Mammary epithelial cell (primary cell): ENCODE measurements at regions of chr19 and their contacts with region 1.

Region 1: DNA sequence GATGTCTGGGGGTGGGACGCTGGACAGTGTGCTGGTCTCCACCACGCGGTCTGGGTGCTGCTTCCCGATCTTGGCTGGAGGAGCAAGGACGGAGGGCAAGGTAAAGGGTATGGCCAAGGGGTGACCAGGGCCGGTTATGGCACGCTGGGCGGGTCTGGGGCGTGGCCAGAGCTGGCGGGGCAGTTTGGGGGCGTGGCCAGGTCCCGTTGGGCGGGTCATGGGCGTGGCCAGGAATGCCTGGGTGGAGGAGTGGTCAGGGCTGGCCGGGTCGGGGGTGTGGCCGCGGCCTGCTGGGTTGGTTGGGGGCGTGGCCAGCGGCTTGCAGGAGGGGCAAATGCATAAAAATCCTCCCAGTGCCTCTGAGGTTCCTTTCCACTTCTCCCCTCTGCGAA is 19.2 kb downstream of the GPX4 start:
- DNase-seq: peak; percentile 69
- H3K4me3 ChIP-seq: no peak overlapping the region
- H3K27ac ChIP-seq: no peak overlapping the region
- H3K4me1 ChIP-seq: peaks cover 14% of the 10 kb centered on the region
- H3K27me3 ChIP-seq: no peaks in the 10 kb centered on the region
- CTCF ChIP-seq: no peak

Region 2: DNA sequence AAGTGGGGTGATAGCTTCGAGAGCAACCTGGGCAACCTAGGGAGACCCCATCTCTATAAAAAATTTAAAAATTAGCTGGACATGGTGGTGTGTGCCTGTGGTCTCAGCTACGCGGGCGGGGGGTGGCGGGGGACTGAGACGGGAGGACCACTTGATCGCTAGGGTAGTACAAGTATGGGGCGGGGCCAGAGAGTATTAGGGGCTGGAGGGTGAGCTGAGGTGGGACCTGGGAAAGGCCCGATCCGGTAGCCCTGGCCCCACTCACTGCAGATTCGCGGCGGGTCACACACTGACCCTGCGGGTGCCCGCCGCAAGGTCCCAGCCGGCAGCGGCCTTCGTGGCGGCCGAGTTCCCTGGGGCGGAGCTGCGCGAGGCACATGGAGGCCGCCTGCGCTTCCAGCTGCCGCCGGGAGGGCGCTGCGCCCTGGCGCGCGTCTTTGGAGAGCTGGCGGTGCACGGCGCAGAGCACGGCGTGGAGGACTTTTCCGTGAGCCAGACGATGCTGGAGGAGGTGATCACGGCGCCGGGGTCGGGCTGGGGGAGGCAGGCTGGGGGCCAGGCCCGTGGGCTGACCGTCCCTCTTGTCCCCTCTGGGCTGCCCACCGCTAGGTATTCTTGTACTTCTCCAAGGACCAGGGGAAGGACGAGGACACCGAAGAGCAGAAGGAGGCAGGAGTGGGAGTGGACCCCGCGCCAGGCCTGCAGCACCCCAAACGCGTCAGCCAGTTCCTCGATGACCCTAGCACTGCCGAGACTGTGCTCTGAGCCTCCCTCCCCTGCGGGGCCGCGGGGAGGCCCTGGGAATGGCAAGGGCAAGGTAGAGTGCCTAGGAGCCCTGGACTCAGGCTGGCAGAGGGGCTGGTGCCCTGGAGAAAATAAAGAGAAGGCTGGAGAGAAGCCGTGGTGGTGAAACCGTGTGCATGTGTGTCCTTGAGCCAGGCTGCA is 58.0 kb before region 1 on chr19:
- CTCF ChIA-PET with region 1: no interaction called
- dilution Hi-C with region 1: loop called (anchors 10 kb)
- in situ Hi-C with region 1: no loop called
- intact Hi-C with region 1: no loop called
- DNase-seq: peak; percentile 52
- H3K4me3 ChIP-seq: no peak overlapping the region
- H3K27ac ChIP-seq: no peak overlapping the region
- H3K4me1 ChIP-seq: peaks cover 30% of the 10 kb centered on the region
- H3K27me3 ChIP-seq: no peaks in the 10 kb centered on the region
- CTCF ChIP-seq: peak; percentile 55 to 71

Region 3: GRCh38 chr19:1076951-1077350 is 46.0 kb before region 1 on chr19:
- CTCF ChIA-PET with region 1: no interaction called
- dilution Hi-C with region 1: no loop called
- in situ Hi-C with region 1: no loop called
- intact Hi-C with region 1: no loop called
- DNase-seq: peak; percentile 77
- H3K4me3 ChIP-seq: peak overlapping the region; percentile 34 to 53 (median 48)
- H3K27ac ChIP-seq: no peak overlapping the region
- H3K4me1 ChIP-seq: peaks cover 12% of the 10 kb centered on the region
- H3K27me3 ChIP-seq: no peaks in the 10 kb centered on the region
- CTCF ChIP-seq: no peak

Region 4: GRCh38 chr19:1087813-1088415 is 35.1 kb before region 1 on chr19:
- CTCF ChIA-PET with region 1: no interaction called
- dilution Hi-C with region 1: loop called (anchors 5 kb)
- in situ Hi-C with region 1: no loop called
- intact Hi-C with region 1: no loop called
- DNase-seq: no peak
- H3K4me3 ChIP-seq: no peak overlapping the region
- H3K27ac ChIP-seq: no peak overlapping the region
- H3K4me1 ChIP-seq: no peaks in the 10 kb centered on the region
- H3K27me3 ChIP-seq: no peaks in the 10 kb centered on the region
- CTCF ChIP-seq: no peak

Region 5: DNA sequence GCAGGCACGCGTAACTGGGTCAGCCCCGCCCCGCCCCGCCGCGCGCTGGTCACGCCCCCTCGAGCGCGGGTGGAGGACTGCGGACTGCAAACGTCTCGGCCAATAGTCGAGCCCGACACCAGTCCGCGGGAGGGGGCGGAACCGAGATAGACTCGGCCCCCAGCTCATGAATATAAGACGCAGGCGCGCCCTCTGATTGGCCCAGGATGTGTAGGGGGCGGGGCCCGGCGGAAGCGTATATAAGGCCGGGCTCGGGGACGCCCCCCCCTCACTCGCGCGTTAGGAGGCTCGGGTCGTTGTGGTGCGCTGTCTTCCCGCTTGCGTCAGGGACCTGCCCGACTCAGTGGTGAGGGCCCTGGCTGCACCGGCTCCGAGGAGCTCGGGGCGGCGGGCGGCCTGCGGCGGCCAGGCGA is 146.1 kb after region 1 on chr19 and contains the start of gene CIRBP:
- CTCF ChIA-PET with region 1: no interaction called
- dilution Hi-C with region 1: loop called (anchors 10 kb)
- in situ Hi-C with region 1: no loop called
- intact Hi-C with region 1: no loop called
- DNase-seq: peak; percentile 98
- H3K4me3 ChIP-seq: peak within 1 kb of the TSS; percentile 55 to 72 (median 61)
- H3K27ac ChIP-seq: peak within 1 kb of the TSS; percentile 77
- H3K4me1 ChIP-seq: peaks cover 54% of the 10 kb centered on the region
- H3K27me3 ChIP-seq: no peaks in the 10 kb centered on the region
- CTCF ChIP-seq: no peak
- total RNA-seq, gene CIRBP: 196 to 221 TPM